Calu3 (cell line): ENCODE measurements at regions of chr17 and their contacts with region 1.

Region 1: DNA sequence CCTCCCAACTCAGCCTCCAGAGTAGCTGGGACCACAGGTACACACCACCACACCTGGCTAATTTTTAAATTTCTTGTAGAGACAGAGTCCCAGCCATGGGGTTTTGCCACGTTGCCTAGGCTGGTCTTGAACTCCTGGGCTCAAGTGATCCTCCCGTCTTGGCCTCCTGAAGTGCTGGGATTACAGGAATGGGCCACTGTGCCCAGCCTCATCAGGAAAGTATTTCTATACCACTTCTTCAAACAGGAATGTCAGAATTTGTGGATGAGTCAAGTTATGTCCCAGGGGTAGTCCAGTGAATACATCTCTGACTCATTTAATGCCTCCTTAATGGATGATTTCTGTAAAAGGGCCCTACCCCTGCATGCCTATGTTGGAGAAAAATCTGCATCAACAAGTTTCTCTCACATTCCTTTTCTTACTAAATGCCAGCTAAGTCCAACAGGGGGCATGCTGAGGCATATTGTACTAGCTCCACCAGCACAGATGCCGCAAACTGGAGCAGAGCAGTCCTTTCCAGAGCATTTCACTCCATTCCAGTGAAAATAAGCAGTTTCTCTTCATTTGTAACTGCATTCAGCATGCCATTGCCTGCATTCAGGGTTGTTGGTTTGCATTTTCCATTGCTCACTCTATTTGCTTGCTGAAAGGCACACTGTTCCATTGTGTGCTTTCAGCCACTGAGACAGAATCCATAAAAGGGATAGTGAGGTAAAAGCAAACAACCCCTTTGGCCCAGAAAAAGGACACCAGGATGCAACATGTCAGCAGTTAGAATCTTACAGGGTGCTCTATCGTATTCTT is 5.3 kb upstream of the CAVIN1 start:
- DNase-seq: peak; percentile 78
- H3K4me3 Mint-ChIP-seq: no peak overlapping the region
- H3K27ac Mint-ChIP-seq: no peak overlapping the region
- H3K4me1 Mint-ChIP-seq: peaks cover 25% of the 10 kb centered on the region
- H3K27me3 Mint-ChIP-seq: peaks cover 5% of the 10 kb centered on the region
- CTCF ChIP-seq: peak; percentile 93

Region 2: DNA sequence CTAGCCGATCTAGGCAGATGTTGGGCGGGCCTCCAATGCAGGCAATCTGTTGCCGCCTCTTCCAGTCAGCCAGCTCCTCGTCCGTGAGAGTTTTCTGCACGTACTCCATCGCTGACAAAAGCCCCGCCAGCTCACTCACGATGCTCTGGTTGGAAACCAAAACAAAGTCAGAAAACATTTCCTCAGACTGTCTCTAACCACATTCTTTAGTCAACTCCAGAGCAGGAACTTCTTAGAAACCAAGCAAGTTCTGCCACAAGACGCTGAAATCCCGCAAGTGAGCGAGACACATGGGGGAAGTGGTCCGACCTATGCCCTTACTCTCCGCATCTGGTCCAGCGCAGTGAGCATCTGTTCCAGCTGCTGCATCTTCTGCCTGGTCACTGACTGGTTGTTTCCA is 90.9 kb before region 1 on chr17:
- CTCF ChIA-PET with region 1: no interaction called
- intact Hi-C with region 1: no loop called
- DNase-seq: no peak
- H3K4me3 Mint-ChIP-seq: no peak overlapping the region
- H3K27ac Mint-ChIP-seq: no peak overlapping the region
- H3K4me1 Mint-ChIP-seq: no peaks in the 10 kb centered on the region
- H3K27me3 Mint-ChIP-seq: no peaks in the 10 kb centered on the region
- CTCF ChIP-seq: no peak

Region 3: DNA sequence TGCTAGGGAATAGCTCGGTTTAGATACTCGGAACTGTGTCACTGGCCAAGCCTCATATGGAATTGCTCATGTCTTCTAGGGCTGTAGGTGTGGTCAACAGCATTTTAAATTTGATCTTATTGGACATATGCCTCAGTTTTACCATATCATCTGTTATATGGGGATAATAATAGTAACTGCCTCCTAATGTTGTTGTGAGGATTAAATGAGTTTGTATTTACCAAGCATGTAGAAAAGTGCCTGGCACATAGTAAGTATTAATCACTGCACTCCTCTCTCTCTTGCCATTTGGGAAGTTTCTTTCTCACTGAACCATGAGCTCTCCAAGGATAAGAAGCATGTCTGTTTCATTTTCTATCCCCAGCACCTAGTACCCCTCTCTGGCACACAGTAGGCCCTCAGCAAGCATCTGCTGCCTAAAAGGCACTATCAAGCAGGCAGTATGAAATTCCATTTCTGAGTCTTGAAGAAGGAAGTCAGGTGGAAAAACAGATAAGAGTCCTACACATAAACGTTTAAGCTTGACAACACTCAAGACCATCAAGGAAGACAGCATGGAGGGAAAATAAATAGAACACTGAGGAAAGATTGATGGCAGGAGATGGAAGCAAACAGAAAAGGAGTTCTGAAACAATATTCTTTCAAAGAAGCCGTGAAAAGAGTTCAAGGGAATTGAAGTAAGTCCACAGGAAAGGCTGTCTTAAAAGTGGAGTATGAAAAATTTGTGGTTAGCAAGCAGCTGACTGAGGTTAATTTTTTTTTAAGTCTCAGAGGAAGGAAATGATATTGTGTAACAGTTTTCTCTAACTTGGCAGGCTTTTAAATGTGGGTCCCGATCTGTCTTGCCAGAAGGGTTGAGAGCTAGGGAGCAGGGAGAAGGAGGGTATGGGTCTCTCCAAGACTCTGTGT is 28.1 kb after region 1 on chr17:
- CTCF ChIA-PET with region 1: interaction called, 4 read pairs
- intact Hi-C with region 1: loop called (anchors 2 kb)
- DNase-seq: peak; percentile 23
- H3K4me3 Mint-ChIP-seq: peak overlapping the region; percentile 97
- H3K27ac Mint-ChIP-seq: peak overlapping the region; percentile 85
- H3K4me1 Mint-ChIP-seq: peaks cover 39% of the 10 kb centered on the region
- H3K27me3 Mint-ChIP-seq: no peaks in the 10 kb centered on the region
- CTCF ChIP-seq: no peak

Region 4: GRCh38 chr17:42517516-42517915 is 89.2 kb after region 1 on chr17:
- CTCF ChIA-PET with region 1: interaction called, 19 read pairs
- intact Hi-C with region 1: loop called (anchors 2 kb)
- DNase-seq: peak; percentile 91
- H3K4me3 Mint-ChIP-seq: no peak overlapping the region
- H3K27ac Mint-ChIP-seq: peak overlapping the region; percentile 95
- H3K4me1 Mint-ChIP-seq: peaks cover 51% of the 10 kb centered on the region
- H3K27me3 Mint-ChIP-seq: no peaks in the 10 kb centered on the region
- CTCF ChIP-seq: peak; percentile 99

Region 5: GRCh38 chr17:42527273-42527703 is 98.9 kb after region 1 on chr17:
- CTCF ChIA-PET with region 1: interaction called, 17 read pairs
- intact Hi-C with region 1: no loop called
- DNase-seq: peak; percentile 88
- H3K4me3 Mint-ChIP-seq: no peak overlapping the region
- H3K27ac Mint-ChIP-seq: peak overlapping the region; percentile 12
- H3K4me1 Mint-ChIP-seq: peaks cover 39% of the 10 kb centered on the region
- H3K27me3 Mint-ChIP-seq: no peaks in the 10 kb centered on the region
- CTCF ChIP-seq: peak; percentile 96